ENCODE measurements at regions of chr5 and their contacts with region 1.

Region 1: GRCh38 chr5:84017523-84018230 is 297.0 kb upstream of the HAPLN1 start:
- DNase-seq: no peak
- H3K4me3 ChIP-seq: no peak overlapping the region
- H3K27ac ChIP-seq: no peak overlapping the region
- H3K4me1 ChIP-seq: peaks cover 0 to 7% (median 0%) of the 10 kb centered on the region in 4 donors
- H3K27me3 ChIP-seq: no peaks in the 10 kb centered on the region
- CTCF ChIP-seq: no peak
- EP300 ChIP-seq: no peak
- POLR2A ChIP-seq: no peak

Region 2: GRCh38 chr5:84382363-84383295 is 365.0 kb after region 1 on chr5:
- intact Hi-C with region 1: loop called (anchors 10 kb)
- DNase-seq: peak; percentile 62
- H3K4me3 ChIP-seq: peak overlapping the region; percentile 38 to 56 (median 54)
- H3K27ac ChIP-seq: peak overlapping the region; percentile 57 to 72 (median 71)
- H3K4me1 ChIP-seq: peaks cover 0 to 32% (median 24%) of the 10 kb centered on the region in 4 donors
- H3K27me3 ChIP-seq: peaks cover 0 to 39% (median 28%) of the 10 kb centered on the region in 3 donors
- CTCF ChIP-seq: no peak
- EP300 ChIP-seq: no peak
- POLR2A ChIP-seq: peak in 1 of 2 donors; percentile 47